Sigmoid colon (tissue), 7 donors: ENCODE measurements at regions of chrX and their contacts with region 1.

Region 1: DNA sequence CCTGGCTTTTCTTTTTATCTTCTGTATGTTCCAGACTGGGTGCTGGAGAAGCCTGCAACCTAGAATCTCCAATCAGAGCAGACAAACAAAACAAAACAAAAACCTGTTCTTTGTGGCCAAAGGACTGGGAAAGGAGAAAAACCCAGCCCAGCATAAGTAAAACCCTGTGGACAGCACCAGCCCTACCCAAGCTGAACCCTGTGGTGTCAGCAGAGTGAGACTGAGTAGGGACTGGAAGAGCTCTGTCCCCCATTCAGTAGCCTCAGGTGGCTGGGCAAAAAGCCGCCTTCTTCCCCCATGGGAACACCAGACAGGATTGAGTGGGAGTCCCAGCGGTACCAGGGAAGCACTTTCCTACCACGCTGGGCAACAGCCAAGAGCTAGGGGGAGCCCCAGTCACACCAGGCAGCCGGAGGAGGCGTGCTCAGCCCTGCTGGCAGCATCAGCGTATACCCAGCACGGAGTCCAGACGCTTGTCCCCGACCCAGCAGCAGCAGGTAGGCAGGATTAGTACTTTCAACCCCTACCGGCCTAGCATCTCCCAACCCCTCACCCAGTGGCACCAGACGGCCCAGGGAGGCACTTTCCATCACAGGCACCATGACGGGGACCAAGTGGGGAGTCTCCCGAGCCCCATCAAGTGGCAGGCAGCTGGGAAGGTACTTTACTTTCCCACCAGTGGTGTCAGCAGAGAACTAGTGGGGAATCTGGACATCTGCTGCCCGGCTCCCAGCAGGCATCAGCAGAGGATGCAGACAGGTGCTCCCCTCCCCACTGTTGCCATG is 8.6 kb upstream of the JADE3 start:
- DNase-seq: peak; percentile 89
- H3K4me3 ChIP-seq: peak overlapping the region; percentile 23 to 49 (median 44)
- H3K27ac ChIP-seq: peak overlapping the region in 2 of 4 donors; percentile 31 to 64
- H3K4me1 ChIP-seq: no peaks in the 10 kb centered on the region
- H3K27me3 ChIP-seq: no peaks in the 10 kb centered on the region
- CTCF ChIP-seq: peak; percentile 46 to 66 (median 54)
- EP300 ChIP-seq: no peak
- POLR2A ChIP-seq: no peak

Region 2: DNA sequence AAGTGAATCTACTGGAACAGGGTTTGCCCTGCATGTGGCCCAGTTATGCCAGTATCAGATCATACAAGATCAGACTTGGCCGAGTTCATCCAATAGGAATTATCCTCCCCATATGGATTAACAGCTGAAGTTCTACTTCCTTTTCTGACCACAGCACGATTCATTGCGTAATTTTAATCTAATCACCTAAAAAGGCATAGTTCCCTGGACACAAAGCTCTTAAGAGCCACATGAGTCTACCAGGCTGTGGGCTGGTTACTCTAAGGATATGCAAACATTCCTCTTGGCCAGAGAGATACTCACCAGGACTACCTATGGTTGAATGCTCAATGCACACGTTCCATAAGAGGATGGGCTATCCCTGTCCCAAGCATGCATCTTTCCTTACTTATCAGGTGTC is 283.1 kb before region 1 on chrX:
- intact Hi-C with region 1: no loop called
- DNase-seq: no peak
- H3K4me3 ChIP-seq: no peak overlapping the region
- H3K27ac ChIP-seq: no peak overlapping the region
- H3K4me1 ChIP-seq: no peaks in the 10 kb centered on the region
- H3K27me3 ChIP-seq: no peaks in the 10 kb centered on the region
- CTCF ChIP-seq: no peak
- EP300 ChIP-seq: no peak
- POLR2A ChIP-seq: no peak

Region 3: GRCh38 chrX:46812445-46812844 is 91.2 kb before region 1 on chrX:
- intact Hi-C with region 1: no loop called
- DNase-seq: no peak
- H3K4me3 ChIP-seq: no peak overlapping the region
- H3K27ac ChIP-seq: no peak overlapping the region
- H3K4me1 ChIP-seq: no peaks in the 10 kb centered on the region
- H3K27me3 ChIP-seq: peaks cover 0 to 3% (median 0%) of the 10 kb centered on the region in 3 donors
- CTCF ChIP-seq: no peak
- EP300 ChIP-seq: no peak
- POLR2A ChIP-seq: no peak

Region 4: GRCh38 chrX:46978341-46979291 is 75.0 kb after region 1 on chrX:
- intact Hi-C with region 1: loop called (anchors 2 kb)
- DNase-seq: peak; percentile 76
- H3K4me3 ChIP-seq: no peak overlapping the region
- H3K27ac ChIP-seq: peak overlapping the region in 3 of 4 donors; percentile 6 to 40 (median 33)
- H3K4me1 ChIP-seq: peaks cover 0 to 4% (median 0%) of the 10 kb centered on the region in 4 donors
- H3K27me3 ChIP-seq: no peaks in the 10 kb centered on the region
- CTCF ChIP-seq: peak; percentile 25 to 41 (median 28)
- EP300 ChIP-seq: no peak
- POLR2A ChIP-seq: no peak

Region 5: DNA sequence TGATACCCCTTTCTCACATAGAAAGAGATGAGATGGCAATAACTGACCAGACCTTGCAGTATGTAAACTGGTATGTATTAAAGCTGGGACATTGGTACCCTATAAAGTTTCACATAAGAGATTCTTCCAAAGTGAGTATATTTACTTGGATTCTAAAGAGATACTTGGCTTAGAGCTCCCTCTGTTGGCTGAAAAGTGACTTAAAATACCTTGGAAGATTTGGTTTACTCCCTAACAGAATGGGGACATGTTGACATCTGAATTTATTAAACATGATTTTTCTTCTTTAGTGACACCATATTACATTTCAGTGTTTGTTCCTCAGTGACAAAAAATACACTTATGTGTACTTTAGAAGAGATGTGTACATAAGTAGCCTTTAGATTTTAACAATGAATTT is 126.7 kb after region 1 on chrX:
- intact Hi-C with region 1: loop called (anchors 5 kb)
- DNase-seq: no peak
- H3K4me3 ChIP-seq: no peak overlapping the region
- H3K27ac ChIP-seq: no peak overlapping the region
- H3K4me1 ChIP-seq: no peaks in the 10 kb centered on the region
- H3K27me3 ChIP-seq: peaks cover 0 to 4% (median 0%) of the 10 kb centered on the region in 3 donors
- CTCF ChIP-seq: peak in 2 of 4 experiments; percentile 28 to 48
- EP300 ChIP-seq: no peak
- POLR2A ChIP-seq: no peak

Region 6: DNA sequence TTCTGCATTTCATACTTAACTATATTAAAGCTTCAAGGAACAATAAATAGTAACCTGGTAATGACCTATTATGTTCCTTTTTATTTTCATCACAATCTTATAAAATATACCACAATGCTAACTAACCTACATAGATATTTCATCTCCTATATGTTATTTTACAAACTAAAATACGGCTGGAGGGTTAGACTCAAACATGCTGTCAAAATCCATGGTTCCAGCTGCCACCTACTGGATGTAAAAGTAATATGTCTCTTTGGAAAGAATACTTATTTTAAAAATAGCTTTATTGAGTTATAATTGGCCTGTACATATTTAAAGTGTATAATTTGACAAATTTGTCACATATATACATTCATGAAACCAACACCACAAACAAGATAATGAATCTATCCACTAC is 189.6 kb after region 1 on chrX:
- intact Hi-C with region 1: loop called (anchors 10 kb)
- DNase-seq: no peak
- H3K4me3 ChIP-seq: no peak overlapping the region
- H3K27ac ChIP-seq: no peak overlapping the region
- H3K4me1 ChIP-seq: no peaks in the 10 kb centered on the region
- H3K27me3 ChIP-seq: no peaks in the 10 kb centered on the region
- CTCF ChIP-seq: peak in 2 of 4 experiments; percentile 17 to 29
- EP300 ChIP-seq: no peak
- POLR2A ChIP-seq: no peak